Activated T-helper 1 cell treated with anti-CD3 and anti-CD28 coated beads, Interleukin-12 subunit alpha, Interleukin-12 subunit beta, Interleukin-2, Interleukin-4 antibody, amounts not matched to agents 30 ng/mL and 10 ng/mL and 1 ng/mL, durations not matched to agents 14 hours and 24 hours and 36 hours (primary cell): ENCODE measurements at regions of chr11 and their contacts with region 1.

Region 1: GRCh38 chr11:43164826-43165225 is 147.0 kb upstream of the API5 start:
- DNase-seq: no peak
- H3K4me3 Mint-ChIP-seq: no peak overlapping the region
- H3K27ac Mint-ChIP-seq: no peak overlapping the region
- H3K4me1 Mint-ChIP-seq: no peaks in the 10 kb centered on the region
- H3K27me3 Mint-ChIP-seq: no peaks in the 10 kb centered on the region

Region 2: GRCh38 chr11:43145653-43146052 is 19.2 kb before region 1 on chr11:
- intact Hi-C with region 1: loop called (anchors 2 kb)
- DNase-seq: no peak
- H3K4me3 Mint-ChIP-seq: no peak overlapping the region
- H3K27ac Mint-ChIP-seq: peak overlapping the region; percentile 70
- H3K4me1 Mint-ChIP-seq: peaks cover 17% of the 10 kb centered on the region
- H3K27me3 Mint-ChIP-seq: no peaks in the 10 kb centered on the region